Activated CD8-positive, alpha-beta T cell treated with anti-CD3 and anti-CD28 coated beads for 36 hours (primary cell): ENCODE measurements at regions of chr11 and their contacts with region 1.

Region 1: GRCh38 chr11:6705905-6706535 is 22.9 kb upstream of the MRPL17 start:
- DNase-seq: peak; percentile 64
- ATAC-seq: peak; percentile 88
- H3K4me3 Mint-ChIP-seq: no peak overlapping the region
- H3K27ac Mint-ChIP-seq: peak overlapping the region; percentile 59
- H3K4me1 Mint-ChIP-seq: peaks cover 19% of the 10 kb centered on the region
- H3K27me3 Mint-ChIP-seq: no peaks in the 10 kb centered on the region
- CTCF ChIP-seq: peak; percentile 85

Region 2: DNA sequence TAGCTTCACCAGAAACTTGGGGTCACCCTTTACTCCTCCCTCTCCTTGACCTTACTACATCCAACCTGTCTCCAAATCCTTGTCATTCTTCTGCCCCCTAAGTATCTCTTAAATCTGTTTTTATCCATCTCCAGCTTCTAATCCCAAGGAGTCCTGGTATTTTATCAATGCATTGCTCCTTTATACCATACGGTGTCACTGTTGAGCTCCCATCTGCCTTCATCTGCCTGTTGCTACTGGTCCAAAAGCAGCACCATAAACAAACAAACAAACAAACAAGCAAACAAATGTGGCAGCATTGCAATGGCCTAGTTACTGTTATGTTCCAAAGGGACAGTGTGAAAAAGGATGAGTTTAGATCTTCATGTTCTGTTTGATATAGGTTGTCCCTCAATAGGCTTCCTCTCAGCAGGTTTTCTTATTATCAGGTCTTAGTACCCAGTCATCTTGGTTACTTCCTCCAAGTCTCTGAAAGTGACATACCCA is 174.7 kb before region 1 on chr11:
- CTCF ChIA-PET with region 1: interaction called, 40 read pairs
- POLR2A ChIA-PET with region 1: no interaction called
- intact Hi-C with region 1: no loop called
- DNase-seq: peak; percentile 22
- ATAC-seq: peak; percentile 69
- H3K4me3 Mint-ChIP-seq: no peak overlapping the region
- H3K27ac Mint-ChIP-seq: no peak overlapping the region
- H3K4me1 Mint-ChIP-seq: peaks cover 12% of the 10 kb centered on the region
- H3K27me3 Mint-ChIP-seq: no peaks in the 10 kb centered on the region
- CTCF ChIP-seq: peak; percentile 81

Region 3: GRCh38 chr11:6612213-6613041 is 93.6 kb before region 1 on chr11 and contains the start of gene TAF10:
- CTCF ChIA-PET with region 1: interaction called, 10 read pairs
- POLR2A ChIA-PET with region 1: no interaction called
- intact Hi-C with region 1: no loop called
- DNase-seq: peak; percentile 98
- ATAC-seq: peak; percentile 88
- H3K4me3 Mint-ChIP-seq: no peak within 1 kb of the TSS
- H3K27ac Mint-ChIP-seq: peak within 1 kb of the TSS; percentile 92
- H3K4me1 Mint-ChIP-seq: peaks cover 38% of the 10 kb centered on the region
- H3K27me3 Mint-ChIP-seq: no peaks in the 10 kb centered on the region
- CTCF ChIP-seq: peak; percentile 69
- total RNA-seq, gene TAF10: 151 to 160 TPM

Region 4: DNA sequence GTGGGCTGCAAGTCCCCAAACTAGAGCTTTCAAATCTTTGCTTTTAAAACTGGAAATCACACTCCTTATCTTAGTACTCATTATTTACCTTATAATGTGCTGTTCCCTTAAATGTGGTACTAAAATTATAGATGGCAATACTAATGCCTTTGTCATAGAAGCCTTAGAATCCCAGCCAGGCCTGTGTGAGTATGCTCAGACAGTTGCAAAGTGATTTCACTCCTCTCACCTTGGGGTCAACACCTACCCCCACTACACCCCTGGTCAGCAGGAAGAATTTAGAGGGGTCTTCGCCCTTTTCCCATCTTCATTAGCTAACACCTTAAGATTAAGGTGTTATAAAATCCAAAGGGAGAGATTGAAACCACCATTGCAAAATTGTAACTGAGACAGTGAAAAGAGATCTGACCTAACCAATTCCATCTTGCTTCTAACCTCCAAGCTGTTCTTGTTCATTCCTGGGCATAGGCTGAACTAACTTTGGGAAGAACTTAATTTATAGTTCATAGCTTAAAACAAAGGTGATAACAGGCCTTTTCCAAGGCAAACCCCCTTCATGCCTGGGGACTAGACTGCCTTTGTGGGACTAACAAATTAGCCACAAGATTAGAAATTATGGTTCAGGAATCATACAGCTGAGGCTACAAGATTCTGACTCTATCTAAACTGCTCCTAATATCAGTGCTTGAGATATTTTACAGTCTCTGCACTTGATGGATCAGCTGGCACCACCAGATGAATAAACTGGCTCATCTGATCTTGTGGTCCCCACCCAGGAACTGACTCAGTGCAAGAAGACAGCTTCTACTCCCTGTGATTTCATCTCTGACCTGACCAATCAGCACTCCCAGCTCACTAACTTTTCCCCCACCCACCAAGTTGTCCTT is 12.4 kb before region 1 on chr11:
- CTCF ChIA-PET with region 1: interaction called, 64 read pairs
- POLR2A ChIA-PET with region 1: interaction called, 6 read pairs
- intact Hi-C with region 1: no loop called
- DNase-seq: peak; percentile 82
- ATAC-seq: peak; percentile 81
- H3K4me3 Mint-ChIP-seq: no peak overlapping the region
- H3K27ac Mint-ChIP-seq: peak overlapping the region; percentile 46
- H3K4me1 Mint-ChIP-seq: peaks cover 31% of the 10 kb centered on the region
- H3K27me3 Mint-ChIP-seq: no peaks in the 10 kb centered on the region
- CTCF ChIP-seq: no peak

Region 5: GRCh38 chr11:6727971-6728760 is 22.1 kb after region 1 on chr11:
- CTCF ChIA-PET with region 1: interaction called, 50 read pairs
- POLR2A ChIA-PET with region 1: interaction called, 4 read pairs
- intact Hi-C with region 1: no loop called
- DNase-seq: no peak
- ATAC-seq: no peak
- H3K4me3 Mint-ChIP-seq: no peak overlapping the region
- H3K27ac Mint-ChIP-seq: peak overlapping the region; percentile 74
- H3K4me1 Mint-ChIP-seq: peaks cover 71% of the 10 kb centered on the region
- H3K27me3 Mint-ChIP-seq: no peaks in the 10 kb centered on the region
- CTCF ChIP-seq: no peak

Region 6: GRCh38 chr11:6746086-6746618 is 40.1 kb after region 1 on chr11:
- CTCF ChIA-PET with region 1: interaction called, 186 read pairs
- POLR2A ChIA-PET with region 1: no interaction called
- intact Hi-C with region 1: no loop called
- DNase-seq: peak; percentile 63
- ATAC-seq: peak; percentile 82
- H3K4me3 Mint-ChIP-seq: no peak overlapping the region
- H3K27ac Mint-ChIP-seq: no peak overlapping the region
- H3K4me1 Mint-ChIP-seq: peaks cover 29% of the 10 kb centered on the region
- H3K27me3 Mint-ChIP-seq: no peaks in the 10 kb centered on the region
- CTCF ChIP-seq: no peak